ENCODE measurements at regions of chr14 and their contacts with region 1.

Region 1: GRCh38 chr14:60734465-60735242 is at the start of gene MNAT1:
- DNase-seq: peak; percentile 70 to 84 (median 75)
- H3K4me3 ChIP-seq: peak within 1 kb of the TSS; percentile 16 to 95 (median 90)
- H3K27ac ChIP-seq: peak within 1 kb of the TSS in 3 of 5 donors; percentile 75 to 81 (median 79)
- H3K4me1 ChIP-seq: peaks cover 10 to 18% of the 10 kb centered on the region in 2 donors
- H3K27me3 ChIP-seq: no peaks in the 10 kb centered on the region
- CTCF ChIP-seq: peak in 1 of 6 experiments; percentile 21
- POLR2A ChIP-seq: peak; percentile 16 to 51
- total RNA-seq, gene MNAT1: 11.7 to 69.2 (median 31.4) TPM

Region 2: DNA sequence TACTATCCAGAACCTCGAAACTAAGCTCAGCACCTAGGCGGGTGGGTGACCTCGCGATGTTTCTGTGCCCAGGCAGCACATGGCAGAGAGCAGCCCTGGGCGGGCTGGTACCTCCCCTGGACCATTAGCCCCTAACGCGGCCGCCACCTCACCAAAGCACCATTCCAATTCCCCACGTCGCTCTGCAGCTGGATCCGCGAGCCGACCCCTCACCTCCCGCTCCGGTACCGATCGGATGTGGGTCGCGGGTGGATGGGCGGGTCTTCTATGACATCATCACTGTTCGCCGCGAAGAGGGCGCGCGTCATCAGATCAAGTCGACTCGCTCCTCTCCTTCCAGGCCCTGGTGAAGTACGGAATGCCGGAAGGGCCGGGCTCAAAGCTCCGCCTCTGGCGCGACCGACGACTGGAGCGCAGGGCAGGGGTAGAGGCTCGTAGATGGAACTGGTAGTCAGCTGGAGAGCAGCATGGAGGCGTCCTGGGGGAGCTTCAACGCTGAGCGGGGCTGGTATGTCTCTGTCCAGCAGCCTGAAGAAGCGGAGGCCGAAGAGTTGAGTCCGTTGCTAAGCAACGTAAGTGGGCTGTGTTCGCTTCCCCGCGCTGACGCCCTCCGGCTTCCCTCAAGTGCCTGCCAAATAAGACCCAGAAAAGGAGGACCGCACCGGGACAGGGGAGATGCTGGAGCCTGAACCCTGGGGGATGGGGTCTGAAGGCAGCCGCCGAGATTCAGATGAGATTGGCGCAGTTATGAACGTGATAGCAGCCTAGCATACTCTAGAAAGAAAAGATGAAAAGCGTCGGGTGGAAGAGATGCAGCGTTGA is 246.4 kb after region 1 on chr14 and contains the starts of genes SLC38A6 and TRMT5:
- intact Hi-C with region 1: loop called in 1 of 2 experiments (anchors 5 kb)
- DNase-seq: peak; percentile 92 to 98 (median 95)
- H3K4me3 ChIP-seq: peak within 1 kb of the TSS; percentile 13 to 89 (median 76)
- H3K27ac ChIP-seq: peak within 1 kb of the TSS in 4 of 5 donors; percentile 50 to 90 (median 79)
- H3K4me1 ChIP-seq: peaks cover 0 to 42% of the 10 kb centered on the region in 2 donors
- H3K27me3 ChIP-seq: no peaks in the 10 kb centered on the region
- CTCF ChIP-seq: no peak
- POLR2A ChIP-seq: peak; percentile 21 to 55
- total RNA-seq, gene SLC38A6: 12.5 to 50.3 (median 25.0) TPM
- total RNA-seq, gene TRMT5: 4.8 to 16.8 (median 13.8) TPM

Region 3: DNA sequence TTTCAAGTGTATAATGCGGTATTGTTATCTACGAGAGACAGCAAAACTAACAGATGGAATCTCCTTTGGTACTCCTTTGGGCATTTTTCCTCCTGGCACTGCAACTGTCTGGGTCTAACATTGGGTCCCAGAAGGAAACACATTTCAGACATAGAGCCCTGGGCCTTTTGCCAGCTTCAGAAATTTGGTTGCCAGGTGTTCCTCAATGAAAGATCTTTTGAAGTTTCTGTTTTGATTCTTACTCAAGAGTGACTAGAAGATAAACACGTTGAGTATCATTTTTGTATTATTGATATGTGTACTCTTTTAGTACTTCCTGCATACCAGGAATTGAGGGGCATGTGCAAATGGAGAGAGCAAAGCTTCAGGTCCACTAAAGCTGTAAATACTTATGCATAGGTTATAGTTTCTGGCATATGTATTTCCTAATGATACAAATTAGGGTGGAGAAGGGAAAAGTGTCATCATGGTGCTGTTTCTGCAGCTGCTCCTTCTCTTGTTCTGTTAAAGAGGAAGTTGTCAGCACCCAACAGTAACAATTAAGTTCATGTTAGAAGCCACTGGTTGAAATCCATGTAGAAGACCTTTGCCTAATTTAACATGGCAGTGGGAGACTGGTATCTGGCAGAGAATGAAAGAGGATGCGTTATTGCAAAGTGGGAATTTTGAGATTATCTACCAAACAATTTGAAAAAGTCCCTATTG is 299.9 kb after region 1 on chr14:
- intact Hi-C with region 1: no loop called
- DNase-seq: no peak
- H3K4me3 ChIP-seq: no peak overlapping the region
- H3K27ac ChIP-seq: no peak overlapping the region
- H3K4me1 ChIP-seq: no peaks in the 10 kb centered on the region
- H3K27me3 ChIP-seq: no peaks in the 10 kb centered on the region
- CTCF ChIP-seq: no peak
- POLR2A ChIP-seq: no peak

Region 4: GRCh38 chr14:61125867-61126572 is 391.4 kb after region 1 on chr14:
- intact Hi-C with region 1: no loop called
- DNase-seq: peak in 4 of 7 donors; percentile 25 to 66 (median 46)
- H3K4me3 ChIP-seq: no peak overlapping the region
- H3K27ac ChIP-seq: peak overlapping the region in 1 of 5 donors; percentile 1
- H3K4me1 ChIP-seq: peaks cover 0 to 11% of the 10 kb centered on the region in 2 donors
- H3K27me3 ChIP-seq: no peaks in the 10 kb centered on the region
- CTCF ChIP-seq: no peak
- POLR2A ChIP-seq: no peak

Region 5: GRCh38 chr14:61671082-61671481 is 936.4 kb after region 1 on chr14:
- intact Hi-C with region 1: no loop called
- DNase-seq: no peak
- H3K4me3 ChIP-seq: no peak overlapping the region
- H3K27ac ChIP-seq: peak overlapping the region in 1 of 5 donors; percentile 31
- H3K4me1 ChIP-seq: peaks cover 0 to 6% of the 10 kb centered on the region in 2 donors
- H3K27me3 ChIP-seq: no peaks in the 10 kb centered on the region
- CTCF ChIP-seq: no peak
- POLR2A ChIP-seq: no peak

Measured in adrenal gland (tissue), 19 donors.